ENCODE measurements at regions of chr11 and their contacts with region 1.

Region 1: GRCh38 chr11:47967577-47968425 is 12.6 kb upstream of the PTPRJ start:
- DNase-seq: no peak
- H3K4me3 ChIP-seq: no peak overlapping the region
- H3K27ac ChIP-seq: no peak overlapping the region
- H3K4me1 ChIP-seq: no peaks in the 10 kb centered on the region
- H3K27me3 ChIP-seq: no peaks in the 10 kb centered on the region
- CTCF ChIP-seq: no peak
- POLR2A ChIP-seq: no peak

Region 2: GRCh38 chr11:47879259-47880158 is 88.3 kb before region 1 on chr11:
- intact Hi-C with region 1: no loop called
- DNase-seq: no peak
- H3K4me3 ChIP-seq: no peak overlapping the region
- H3K27ac ChIP-seq: no peak overlapping the region
- H3K4me1 ChIP-seq: no peaks in the 10 kb centered on the region
- H3K27me3 ChIP-seq: no peaks in the 10 kb centered on the region
- CTCF ChIP-seq: no peak
- POLR2A ChIP-seq: no peak

Region 3: DNA sequence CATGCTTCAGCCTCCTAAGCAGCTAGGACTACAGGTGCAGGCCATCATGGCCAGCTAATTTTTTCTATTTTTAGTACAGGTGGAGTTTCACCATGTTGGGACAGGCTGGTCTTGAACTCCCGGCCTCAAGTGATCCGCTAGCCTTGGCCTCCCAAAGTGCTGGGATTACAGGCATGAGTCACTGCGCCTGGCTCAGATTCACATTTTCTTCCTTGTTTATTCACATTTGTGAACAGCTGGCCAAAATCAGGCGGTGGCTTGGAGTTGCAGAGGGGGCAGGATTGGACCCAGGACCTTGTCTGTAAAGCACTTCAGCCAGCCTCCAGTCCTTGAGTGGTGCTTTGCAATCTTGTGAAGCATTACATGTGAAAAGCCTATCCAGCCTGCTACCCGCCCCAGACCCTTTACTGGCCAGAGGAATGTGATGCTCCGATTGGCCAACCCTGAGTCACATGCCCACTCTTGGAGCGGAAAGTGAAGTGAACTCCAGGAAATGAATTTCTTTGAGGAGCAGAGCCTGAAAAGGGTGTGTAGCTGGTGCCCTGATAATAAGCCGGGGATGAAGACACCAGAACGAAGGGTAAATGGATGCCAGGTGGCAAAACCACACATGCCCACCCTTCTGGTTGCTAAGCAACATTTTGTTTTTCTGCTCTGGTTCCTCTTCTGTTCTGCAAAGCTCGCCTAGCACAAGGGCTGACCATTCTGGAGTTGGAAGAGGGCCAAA is 50.0 kb before region 1 on chr11:
- intact Hi-C with region 1: loop called (anchors 10 kb)
- DNase-seq: peak in 1 of 2 donors; percentile 98
- H3K4me3 ChIP-seq: peak overlapping the region in 1 of 2 donors; percentile 21
- H3K27ac ChIP-seq: peak overlapping the region; percentile 71
- H3K4me1 ChIP-seq: peaks cover 27% of the 10 kb centered on the region
- H3K27me3 ChIP-seq: no peaks in the 10 kb centered on the region
- CTCF ChIP-seq: no peak
- POLR2A ChIP-seq: no peak

Region 4: DNA sequence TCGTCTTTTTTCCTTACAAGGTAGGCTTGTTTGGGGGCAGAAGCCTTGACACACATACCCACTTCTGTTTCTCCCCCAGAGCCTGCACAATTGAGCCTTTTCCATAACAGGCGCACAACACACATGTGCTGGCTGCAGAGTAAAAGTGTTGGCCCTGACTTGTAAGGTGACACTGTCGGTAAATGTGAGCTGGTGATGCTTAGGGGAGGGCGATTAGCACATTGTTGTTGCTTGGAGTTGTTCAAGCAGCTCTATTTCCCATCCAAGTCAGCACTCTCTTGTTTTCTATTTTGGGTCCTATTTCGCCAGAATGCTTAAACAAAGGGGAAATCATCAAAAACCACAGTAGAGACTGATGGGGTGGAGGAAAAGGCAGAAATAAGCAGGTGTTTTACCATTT is 39.4 kb before region 1 on chr11:
- intact Hi-C with region 1: no loop called
- DNase-seq: no peak
- H3K4me3 ChIP-seq: no peak overlapping the region
- H3K27ac ChIP-seq: no peak overlapping the region
- H3K4me1 ChIP-seq: peaks cover 9% of the 10 kb centered on the region
- H3K27me3 ChIP-seq: no peaks in the 10 kb centered on the region
- CTCF ChIP-seq: no peak
- POLR2A ChIP-seq: no peak

Measured in vagina (tissue), 2 donors.